Activated T-helper 2 cell treated with anti-CD3 and anti-CD28 coated beads, Interferon-gamma antibody, Interleukin-2, Interleukin-4, amounts not matched to agents 10 μg/mL and 5 μg/mL and 100 μg/mL, durations not matched to agents 14 hours and 24 hours and 36 hours (primary cell): ENCODE measurements at regions of chr5 and their contacts with region 1.

Region 1: GRCh38 chr5:137320056-137321045 is 178.8 kb downstream of the SPOCK1 start:
- DNase-seq: peak; percentile 16
- H3K4me3 Mint-ChIP-seq: no peak overlapping the region
- H3K27ac Mint-ChIP-seq: no peak overlapping the region
- H3K4me1 Mint-ChIP-seq: no peaks in the 10 kb centered on the region
- H3K27me3 Mint-ChIP-seq: peaks cover 8% of the 10 kb centered on the region

Region 2: GRCh38 chr5:137498736-137499505 is 178.6 kb after region 1 on chr5 and contains the start of gene SPOCK1:
- intact Hi-C with region 1: loop called (anchors 1 kb)
- DNase-seq: peak; percentile 49
- H3K4me3 Mint-ChIP-seq: no peak within 1 kb of the TSS
- H3K27ac Mint-ChIP-seq: no peak within 1 kb of the TSS
- H3K4me1 Mint-ChIP-seq: no peaks in the 10 kb centered on the region
- H3K27me3 Mint-ChIP-seq: peaks cover 31% of the 10 kb centered on the region
- total RNA-seq, gene SPOCK1: not detected in 2 replicates

Region 3: GRCh38 chr5:137594717-137595116 is 274.4 kb after region 1 on chr5:
- intact Hi-C with region 1: no loop called
- DNase-seq: no peak
- H3K4me3 Mint-ChIP-seq: no peak overlapping the region
- H3K27ac Mint-ChIP-seq: no peak overlapping the region
- H3K4me1 Mint-ChIP-seq: no peaks in the 10 kb centered on the region
- H3K27me3 Mint-ChIP-seq: peaks cover 22% of the 10 kb centered on the region